ENCODE measurements at regions of chr16 and their contacts with region 1.

Region 1: DNA sequence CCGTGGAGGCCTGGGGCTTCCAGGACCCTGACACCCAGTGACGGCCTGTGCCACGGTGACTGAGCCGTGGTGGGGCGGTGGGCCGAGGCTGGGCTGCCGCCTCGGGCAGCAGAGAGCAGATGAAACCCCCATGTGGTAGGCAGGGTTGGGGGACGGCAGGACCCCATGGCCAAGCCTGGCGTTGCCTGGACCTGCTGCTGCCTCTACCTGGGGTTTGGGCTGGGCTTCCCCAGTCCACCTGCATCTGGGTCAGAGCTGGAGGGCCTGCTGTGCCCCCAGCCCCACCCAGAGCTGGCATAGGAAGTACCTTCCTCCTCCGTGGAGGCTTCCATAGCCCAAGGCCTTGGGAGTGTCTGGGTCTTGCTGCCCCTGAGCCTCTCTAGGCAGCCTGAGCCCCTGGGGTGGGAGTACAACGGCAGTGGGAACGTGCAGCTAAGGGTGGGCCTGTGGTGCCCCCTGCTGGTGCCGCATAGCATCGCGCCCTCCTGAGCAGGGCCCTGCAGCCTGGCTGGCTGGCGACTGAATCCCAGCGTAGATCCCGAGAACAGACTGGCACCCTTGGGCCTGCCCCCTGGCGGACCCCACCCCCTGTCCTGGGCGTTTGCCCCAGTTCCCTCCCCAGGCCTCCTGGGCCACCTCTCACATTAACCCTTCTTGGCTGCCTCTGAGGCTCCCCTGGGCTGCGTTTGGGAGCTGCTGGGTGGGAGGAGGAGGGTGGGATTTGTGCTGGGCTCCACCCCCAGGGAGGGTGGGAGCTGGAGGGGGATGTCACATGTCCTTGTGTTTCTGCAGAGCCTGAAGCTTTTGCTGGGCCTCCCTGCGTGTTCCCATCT is 12.6 kb upstream of the ATP6V0C start:
- DNase-seq: peak in 1 of 2 donors; percentile 97
- H3K4me3 ChIP-seq: no peak overlapping the region
- CTCF ChIP-seq: peak in 1 of 3 donors; percentile 82
- POLR2A ChIP-seq: no peak

Region 2: GRCh38 chr16:2236337-2237101 is 264.6 kb before region 1 on chr16 and contains the start of gene DNASE1L2:
- intact Hi-C with region 1: loop called (anchors 10 kb)
- DNase-seq: no peak
- H3K4me3 ChIP-seq: no peak within 1 kb of the TSS
- CTCF ChIP-seq: no peak
- POLR2A ChIP-seq: no peak
- total RNA-seq, gene DNASE1L2: 39.8 to 93.3 (median 55.0) TPM

Region 3: GRCh38 chr16:2340564-2341455 is 160.3 kb before region 1 on chr16 and contains the start of gene ABCA3:
- intact Hi-C with region 1: loop called (anchors 1 kb)
- DNase-seq: peak; percentile 86 to 98
- H3K4me3 ChIP-seq: peak within 1 kb of the TSS; percentile 60
- CTCF ChIP-seq: peak; percentile 56 to 99 (median 98)
- POLR2A ChIP-seq: no peak
- total RNA-seq, gene ABCA3: 5.4 to 10.3 (median 9.5) TPM

Region 4: GRCh38 chr16:3880623-3881498 is 1379.7 kb after region 1 on chr16 and contains the start of gene CREBBP:
- intact Hi-C with region 1: no loop called
- DNase-seq: peak; percentile 74 to 96
- H3K4me3 ChIP-seq: peak within 1 kb of the TSS; percentile 79
- CTCF ChIP-seq: no peak
- POLR2A ChIP-seq: no peak
- total RNA-seq, gene CREBBP: 45.5 to 152 (median 65.7) TPM

Measured in lower leg skin (tissue), 4 donors.